ENCODE measurements at regions of chr19 and their contacts with region 1.

Region 1: DNA sequence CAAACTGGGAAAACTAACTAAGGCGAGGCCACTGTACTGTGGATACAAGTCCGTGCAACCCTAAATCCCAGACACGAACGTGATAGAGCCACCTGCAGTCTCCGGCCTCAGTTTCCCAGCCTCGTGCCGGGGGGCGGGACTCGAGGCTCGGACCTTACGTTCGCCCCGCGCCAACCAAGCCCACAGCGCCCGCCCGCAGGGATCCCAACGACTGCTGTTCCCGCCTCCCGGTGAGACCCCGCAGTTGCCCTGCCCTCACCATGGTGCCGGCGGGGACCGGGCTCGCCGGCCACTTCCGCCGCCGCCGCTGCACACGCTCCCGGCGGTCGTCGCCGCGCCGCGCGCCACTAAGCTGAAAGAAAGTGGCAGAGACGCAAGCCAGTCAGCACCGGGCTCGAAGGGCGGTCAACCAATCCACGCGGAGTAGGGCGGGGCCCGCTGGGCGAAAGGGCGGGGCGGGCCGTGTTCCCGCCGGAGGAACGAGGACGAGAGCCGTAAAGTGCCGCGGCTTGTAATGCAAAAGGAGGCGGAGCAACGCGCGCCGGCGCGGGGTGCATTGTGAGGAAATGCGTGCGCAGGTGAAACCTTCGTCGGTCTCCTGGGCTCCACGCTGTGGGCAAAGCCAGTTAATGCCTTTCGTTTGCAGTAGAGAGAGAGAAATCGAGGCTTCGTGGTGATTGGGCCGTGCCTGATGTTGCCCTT is at the start of gene LSM4:
- DNase-seq: peak; percentile 100
- H3K4me3 ChIP-seq: peak within 1 kb of the TSS; percentile 89
- H3K27ac ChIP-seq: peak within 1 kb of the TSS; percentile 90
- H3K4me1 ChIP-seq: peaks cover 46% of the 10 kb centered on the region
- CTCF ChIP-seq: peak; percentile 65
- total RNA-seq, gene LSM4: 451 and 482 TPM in 2 replicates

Region 2: GRCh38 chr19:18203863-18204393 is 119.0 kb before region 1 on chr19 and contains the start of gene RAB3A:
- CTCF ChIA-PET with region 1: no interaction called
- POLR2A ChIA-PET with region 1: interaction called, 3 read pairs
- intact Hi-C with region 1: loop called (anchors 2 kb)
- DNase-seq: peak; percentile 100
- H3K4me3 ChIP-seq: peak within 1 kb of the TSS; percentile 87
- H3K27ac ChIP-seq: peak within 1 kb of the TSS; percentile 84
- H3K4me1 ChIP-seq: peaks cover 29% of the 10 kb centered on the region
- CTCF ChIP-seq: no peak
- total RNA-seq, gene RAB3A: 2.9 and 4.9 TPM in 2 replicates

Region 3: DNA sequence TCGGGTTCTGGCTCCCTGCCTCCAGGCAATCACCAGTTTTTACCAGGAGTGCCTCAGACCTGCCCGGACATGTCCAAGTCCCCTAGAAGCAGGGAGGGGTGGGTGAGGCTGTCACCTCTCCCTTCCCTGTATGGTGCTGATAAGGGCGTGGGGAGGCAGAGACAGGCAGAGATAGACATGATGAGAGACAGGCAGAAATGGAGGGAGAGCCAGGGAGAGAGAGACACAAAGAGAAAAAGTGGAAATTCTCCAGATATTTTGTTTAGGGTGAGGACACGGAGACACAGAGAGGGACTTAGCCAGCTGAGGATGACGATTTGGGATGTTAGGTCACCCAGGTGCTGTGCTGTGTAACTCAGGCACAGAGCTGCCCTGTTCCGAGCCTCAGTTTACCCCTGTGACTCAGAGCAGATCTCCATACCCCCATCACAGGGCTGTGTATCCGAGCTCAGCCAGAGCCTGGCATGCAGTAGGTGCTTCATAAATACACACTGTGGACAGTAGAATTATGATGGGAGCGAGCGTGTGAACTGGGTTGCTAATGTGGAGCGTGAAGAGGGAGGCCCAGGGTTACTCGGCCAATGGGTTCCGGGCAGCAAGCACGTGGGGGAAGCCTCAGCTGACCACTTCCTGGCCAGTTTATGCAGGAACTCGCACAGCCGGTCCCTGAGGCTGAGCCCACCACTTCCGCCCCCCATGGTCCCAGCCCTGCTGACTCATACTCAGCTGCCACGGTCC is 51.2 kb after region 1 on chr19:
- CTCF ChIA-PET with region 1: no interaction called
- POLR2A ChIA-PET with region 1: no interaction called
- intact Hi-C with region 1: no loop called
- DNase-seq: peak; percentile 79
- H3K4me3 ChIP-seq: peak overlapping the region; percentile 11
- H3K27ac ChIP-seq: no peak overlapping the region
- H3K4me1 ChIP-seq: peaks cover 15% of the 10 kb centered on the region
- CTCF ChIP-seq: no peak

Region 4: GRCh38 chr19:19578252-19578651 is 1255.3 kb after region 1 on chr19:
- CTCF ChIA-PET with region 1: no interaction called
- POLR2A ChIA-PET with region 1: no interaction called
- intact Hi-C with region 1: no loop called
- DNase-seq: no peak
- H3K4me3 ChIP-seq: no peak overlapping the region
- H3K27ac ChIP-seq: no peak overlapping the region
- H3K4me1 ChIP-seq: no peaks in the 10 kb centered on the region
- CTCF ChIP-seq: no peak

Measured in OCI-LY7 (cell line).